Stomach (tissue), 19 donors: ENCODE measurements at regions of chr2 and their contacts with region 1.

Region 1: DNA sequence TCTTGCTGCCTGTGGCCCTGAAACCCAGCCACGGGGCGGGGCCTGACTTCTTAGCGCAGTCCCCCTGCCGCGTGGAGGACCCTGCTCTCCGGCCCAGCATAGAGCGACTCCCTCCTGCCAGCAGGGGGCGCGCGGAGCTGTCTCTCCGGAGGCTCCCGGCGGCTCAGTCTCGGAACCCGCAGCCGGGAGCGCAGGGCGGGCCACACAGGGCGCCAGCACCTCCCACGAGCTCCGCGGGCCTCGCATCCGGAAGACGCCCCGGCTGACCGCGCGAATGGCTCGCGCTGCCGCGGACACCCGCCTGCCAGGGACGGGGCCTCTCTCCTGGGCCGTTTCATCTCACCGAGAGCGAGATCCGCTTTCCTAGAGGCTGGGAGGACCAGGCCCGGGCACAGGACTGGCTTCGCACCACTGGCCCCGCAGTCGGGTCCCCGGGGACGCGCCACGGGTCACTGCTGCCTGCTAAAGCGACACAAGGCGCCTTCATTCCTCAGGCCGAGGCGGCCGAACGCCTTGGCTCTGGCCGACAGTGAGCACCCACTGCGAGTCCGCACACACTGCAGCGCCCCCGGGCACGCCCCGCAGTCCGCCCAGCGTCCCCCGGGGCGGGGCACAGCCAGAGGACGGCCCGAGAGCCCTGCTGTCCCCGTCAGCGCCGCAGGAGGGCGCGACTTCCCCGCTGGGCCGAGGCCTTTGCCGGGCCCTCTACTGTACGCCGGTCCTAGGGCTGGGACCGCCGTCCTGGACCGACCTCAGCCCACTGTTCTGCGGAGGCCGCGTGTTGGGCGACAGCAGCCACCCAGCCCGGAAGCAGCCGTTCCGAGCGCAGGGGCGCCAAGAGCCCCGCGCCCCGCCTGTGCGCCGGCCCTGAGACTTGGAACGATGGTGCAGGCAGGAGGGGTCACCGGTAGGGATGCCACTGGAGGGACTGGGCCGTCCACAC is 39.0 kb upstream of the ARHGEF4 start:
- DNase-seq: peak; percentile 91 to 96
- H3K4me3 ChIP-seq: peak overlapping the region; percentile 68 to 83 (median 71)
- H3K27ac ChIP-seq: peak overlapping the region; percentile 85 to 94 (median 90)
- H3K4me1 ChIP-seq: peaks cover 10 to 21% (median 17%) of the 10 kb centered on the region in 4 donors
- H3K27me3 ChIP-seq: peaks cover 0 to 18% (median 0%) of the 10 kb centered on the region in 3 donors
- CTCF ChIP-seq: peak in 5 of 7 experiments; percentile 73 to 92 (median 84)
- EP300 ChIP-seq: no peak
- POLR2A ChIP-seq: no peak

Region 2: DNA sequence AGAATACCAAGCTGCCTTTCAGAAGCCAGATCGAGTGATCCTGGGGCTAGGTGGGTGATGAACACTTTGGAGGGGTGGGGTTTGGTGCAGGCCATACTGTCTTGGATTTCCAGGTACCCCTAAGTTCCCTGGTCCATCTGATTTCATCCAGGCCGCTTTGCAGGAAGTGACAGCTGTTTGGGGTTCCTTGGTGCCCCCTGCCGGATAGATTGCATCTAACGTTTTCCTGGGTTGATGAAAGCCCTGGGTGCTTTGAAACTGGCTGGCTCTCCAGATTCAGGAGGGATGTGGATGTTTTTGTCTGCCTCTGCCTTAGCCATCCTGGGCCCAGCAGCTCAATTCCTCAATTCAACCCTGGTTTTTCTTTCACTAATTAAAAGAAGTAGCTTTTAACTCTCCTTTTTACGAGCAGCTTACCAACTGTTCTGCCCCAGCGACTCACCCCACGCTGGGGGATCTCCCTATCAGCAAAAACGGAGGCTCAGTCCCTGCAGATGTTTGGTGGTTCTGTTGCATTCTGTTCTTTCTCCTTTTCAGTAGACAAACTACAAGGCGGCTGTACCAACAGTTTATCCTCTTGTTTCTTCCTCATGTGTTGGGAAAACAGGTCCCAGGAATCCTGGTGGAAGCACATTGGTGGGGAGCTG is 76.1 kb after region 1 on chr2:
- intact Hi-C with region 1: loop called (anchors 10 kb)
- DNase-seq: peak; percentile 72 to 89
- H3K4me3 ChIP-seq: no peak overlapping the region
- H3K27ac ChIP-seq: no peak overlapping the region
- H3K4me1 ChIP-seq: no peaks in the 10 kb centered on the region
- H3K27me3 ChIP-seq: peaks cover 0 to 9% (median 4%) of the 10 kb centered on the region in 3 donors
- CTCF ChIP-seq: peak in 5 of 7 experiments; percentile 28 to 60 (median 43)
- EP300 ChIP-seq: no peak
- POLR2A ChIP-seq: no peak

Region 3: DNA sequence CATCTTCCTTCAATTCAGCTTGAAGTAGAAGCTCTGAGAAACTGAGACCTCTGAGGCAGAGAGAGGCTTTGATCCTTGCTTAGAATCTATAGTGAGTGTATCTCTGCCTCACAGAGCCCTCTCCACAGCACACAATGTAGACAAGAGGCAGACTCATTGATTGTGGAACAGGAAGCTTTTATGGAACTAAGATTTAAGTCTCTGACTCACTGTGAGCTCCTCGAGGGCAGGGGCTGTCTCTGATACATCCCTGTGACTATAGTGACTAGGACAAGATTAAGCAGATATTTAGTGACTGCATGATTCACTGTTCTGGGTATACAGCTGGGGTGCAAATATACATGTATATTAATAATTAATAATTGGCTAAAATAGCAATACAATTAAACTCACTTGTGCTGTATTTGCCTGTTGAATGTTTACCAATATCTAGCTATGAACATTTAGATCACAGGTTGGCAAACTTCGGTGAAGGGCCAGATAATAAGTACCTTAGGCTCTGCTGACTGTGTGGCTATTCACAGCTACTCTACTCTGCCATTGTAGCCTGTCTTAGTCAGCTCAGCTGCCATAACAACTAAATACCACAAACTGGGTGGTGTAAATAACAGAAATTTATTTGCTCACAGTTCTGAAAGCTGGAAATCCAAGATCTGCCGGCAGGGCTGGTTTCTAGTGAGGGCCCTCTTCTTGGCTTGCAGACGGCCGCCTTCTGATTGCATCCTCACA is 93.3 kb after region 1 on chr2:
- intact Hi-C with region 1: no loop called
- DNase-seq: no peak
- H3K4me3 ChIP-seq: no peak overlapping the region
- H3K27ac ChIP-seq: no peak overlapping the region
- H3K4me1 ChIP-seq: no peaks in the 10 kb centered on the region
- H3K27me3 ChIP-seq: peaks cover 0 to 28% (median 0%) of the 10 kb centered on the region in 3 donors
- CTCF ChIP-seq: no peak
- EP300 ChIP-seq: no peak
- POLR2A ChIP-seq: no peak

Region 4: DNA sequence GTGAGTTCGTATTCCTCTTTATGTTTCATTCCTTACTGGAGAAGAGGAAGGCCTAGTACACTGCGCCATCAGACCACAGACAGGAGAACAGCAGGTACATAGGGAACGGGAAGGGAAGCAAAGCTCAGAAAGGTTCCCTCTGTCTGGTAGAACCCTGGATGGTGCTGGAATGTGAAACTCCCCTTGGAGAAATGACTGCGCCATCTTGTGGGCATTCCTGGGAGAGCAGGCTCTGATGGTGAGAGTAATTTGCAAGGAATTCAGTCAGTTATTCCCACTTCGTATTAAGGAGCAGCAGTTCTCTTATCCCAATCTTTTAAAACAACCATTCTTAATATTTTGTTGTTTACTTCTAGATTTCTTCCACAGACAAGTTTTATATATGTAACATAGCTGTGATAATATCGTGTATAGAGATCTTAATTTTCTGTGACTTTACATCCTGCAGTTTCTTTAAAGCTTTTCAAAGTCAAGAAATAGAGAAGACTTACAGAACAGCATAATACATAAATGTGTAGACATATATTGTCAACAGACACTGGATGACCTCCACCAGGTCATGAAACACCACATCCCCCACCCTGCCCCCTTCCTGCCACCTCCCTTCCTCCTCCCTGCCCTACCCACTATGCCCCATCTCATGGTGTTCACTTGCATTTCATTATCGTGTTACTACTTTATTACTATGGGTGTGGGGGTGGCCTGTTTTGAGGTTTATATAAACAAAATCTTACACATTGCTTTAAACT is 122.8 kb after region 1 on chr2:
- intact Hi-C with region 1: loop called (anchors 5 kb)
- DNase-seq: peak; percentile 68 to 78
- H3K4me3 ChIP-seq: no peak overlapping the region
- H3K27ac ChIP-seq: no peak overlapping the region
- H3K4me1 ChIP-seq: peaks cover 0 to 3% (median 0%) of the 10 kb centered on the region in 4 donors
- H3K27me3 ChIP-seq: peaks cover 0 to 28% (median 8%) of the 10 kb centered on the region in 3 donors
- CTCF ChIP-seq: peak in 5 of 7 experiments; percentile 49 to 69 (median 57)
- EP300 ChIP-seq: no peak
- POLR2A ChIP-seq: no peak

Region 5: GRCh38 chr2:131535526-131535925 is 737.8 kb after region 1 on chr2:
- intact Hi-C with region 1: no loop called
- DNase-seq: no peak
- H3K4me3 ChIP-seq: no peak overlapping the region
- H3K27ac ChIP-seq: no peak overlapping the region
- H3K4me1 ChIP-seq: no peaks in the 10 kb centered on the region
- H3K27me3 ChIP-seq: no peaks in the 10 kb centered on the region
- CTCF ChIP-seq: no peak
- EP300 ChIP-seq: no peak
- POLR2A ChIP-seq: no peak